CD8-positive, alpha-beta T cell (primary cell): ENCODE measurements at regions of chr5 and their contacts with region 1.

Region 1: DNA sequence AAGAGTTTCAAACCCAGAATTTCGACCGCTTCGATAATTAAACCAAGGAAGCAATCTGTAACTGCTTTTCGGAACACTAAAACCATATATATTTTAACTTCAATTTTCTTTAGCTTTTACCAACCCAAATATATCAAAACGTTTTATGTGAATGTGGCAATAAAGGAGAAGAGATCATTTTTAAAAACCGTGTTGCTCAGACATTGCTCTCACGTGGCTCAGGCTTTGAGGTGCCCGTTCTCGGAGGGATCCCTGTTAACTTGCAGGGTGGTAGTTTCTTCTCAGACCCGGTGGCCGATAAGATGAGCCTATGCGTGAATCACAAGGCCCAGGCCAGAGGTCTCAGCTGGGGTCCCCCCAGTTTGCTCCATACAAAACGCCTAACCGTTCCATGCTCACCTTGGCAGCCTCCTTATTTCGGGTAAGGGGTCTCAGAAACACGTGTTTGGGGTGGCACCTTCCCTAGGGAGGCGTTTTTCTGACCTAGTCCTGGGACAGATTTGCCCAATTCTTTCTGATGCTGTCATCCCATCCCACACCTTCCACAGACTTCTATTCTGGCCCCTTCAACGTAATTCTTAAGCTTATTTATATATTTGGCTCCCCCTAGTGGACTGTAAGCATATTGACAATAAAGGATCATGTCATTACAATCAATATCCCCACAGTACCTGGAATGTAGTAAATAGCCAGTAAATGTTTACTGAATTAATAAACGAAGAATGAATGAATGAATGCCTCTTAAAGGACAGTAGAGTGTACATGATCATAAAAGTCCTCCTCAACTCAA is 48.1 kb downstream of the THBS4 start:
- DNase-seq: peak in 5 of 9 experiments; percentile 15 to 69 (median 52)
- ATAC-seq: peak; percentile 83
- H3K4me3 ChIP-seq: peak overlapping the region; percentile 10 to 25
- H3K4me3 Mint-ChIP-seq: peak overlapping the region; percentile 78
- H3K27ac ChIP-seq: no peak overlapping the region
- H3K27ac Mint-ChIP-seq: peak overlapping the region; percentile 74
- H3K4me1 ChIP-seq: peaks cover 10% of the 10 kb centered on the region
- H3K4me1 Mint-ChIP-seq: peaks cover 11% of the 10 kb centered on the region
- H3K27me3 ChIP-seq: no peaks in the 10 kb centered on the region
- H3K27me3 Mint-ChIP-seq: no peaks in the 10 kb centered on the region
- CTCF ChIP-seq: peak; percentile 61

Region 2: GRCh38 chr5:79396265-79396664 is 687.0 kb before region 1 on chr5:
- CTCF ChIA-PET with region 1: no interaction called
- POLR2A ChIA-PET with region 1: no interaction called
- intact Hi-C with region 1: no loop called
- DNase-seq: no peak
- ATAC-seq: no peak
- H3K4me3 ChIP-seq: no peak overlapping the region
- H3K4me3 Mint-ChIP-seq: no peak overlapping the region
- H3K27ac ChIP-seq: no peak overlapping the region
- H3K27ac Mint-ChIP-seq: no peak overlapping the region
- H3K4me1 ChIP-seq: no peaks in the 10 kb centered on the region
- H3K4me1 Mint-ChIP-seq: no peaks in the 10 kb centered on the region
- H3K27me3 ChIP-seq: no peaks in the 10 kb centered on the region
- H3K27me3 Mint-ChIP-seq: no peaks in the 10 kb centered on the region
- CTCF ChIP-seq: no peak

Region 3: GRCh38 chr5:79857714-79858409 is 225.4 kb before region 1 on chr5:
- CTCF ChIA-PET with region 1: interaction called, 3 read pairs
- POLR2A ChIA-PET with region 1: no interaction called
- intact Hi-C with region 1: loop called in 1 of 2 experiments (anchors 1 kb)
- DNase-seq: peak; percentile 56 to 85 (median 76)
- ATAC-seq: peak; percentile 58
- H3K4me3 ChIP-seq: no peak overlapping the region
- H3K4me3 Mint-ChIP-seq: no peak overlapping the region
- H3K27ac ChIP-seq: no peak overlapping the region
- H3K27ac Mint-ChIP-seq: no peak overlapping the region
- H3K4me1 ChIP-seq: peaks cover 5% of the 10 kb centered on the region
- H3K4me1 Mint-ChIP-seq: peaks cover 2% of the 10 kb centered on the region
- H3K27me3 ChIP-seq: no peaks in the 10 kb centered on the region
- H3K27me3 Mint-ChIP-seq: peaks cover 2% of the 10 kb centered on the region
- CTCF ChIP-seq: peak; percentile 96

Region 4: DNA sequence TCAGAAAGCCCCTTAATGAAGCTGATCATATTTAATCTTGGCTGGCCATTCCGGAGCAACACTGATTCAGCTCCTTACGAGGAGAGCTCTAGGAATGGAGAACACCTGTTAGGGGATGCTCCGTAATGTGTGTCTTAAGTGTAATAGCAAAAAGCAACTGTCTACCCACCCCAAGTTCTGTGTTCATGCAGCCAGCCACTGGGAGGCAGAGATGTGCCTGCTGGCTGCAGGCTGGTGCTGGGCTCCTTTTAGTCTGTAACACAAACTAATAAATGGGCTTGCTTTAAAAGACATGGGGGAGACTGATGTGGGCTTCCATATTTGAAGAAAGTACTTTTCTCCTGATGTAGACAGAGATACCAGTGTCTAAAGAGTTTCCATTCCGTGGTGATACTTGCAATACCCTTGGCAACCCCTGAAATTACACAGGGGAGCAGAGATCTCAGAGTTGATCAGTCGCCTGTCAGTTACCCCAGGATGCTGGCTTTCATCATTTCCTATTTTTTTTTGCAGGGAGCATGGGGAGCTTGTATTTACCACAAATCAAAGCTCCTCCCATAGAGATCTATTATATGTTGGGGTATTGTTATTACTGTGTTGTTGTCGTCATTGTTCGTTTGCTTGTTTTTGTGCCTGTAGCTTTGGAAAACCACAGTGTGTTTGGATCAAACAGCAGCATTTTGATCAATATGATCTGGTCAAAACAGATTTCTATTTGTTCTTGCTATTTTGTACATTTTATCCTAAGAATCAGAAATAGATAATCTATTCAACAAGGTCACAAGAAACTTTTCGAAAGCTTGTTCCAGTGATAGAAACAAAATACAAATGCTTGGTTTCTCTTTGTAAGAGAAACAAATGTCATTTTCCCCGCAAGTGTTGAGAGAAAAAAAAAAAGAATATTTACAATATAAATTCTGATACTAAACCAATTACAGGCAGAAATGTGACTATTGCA is 158.1 kb before region 1 on chr5:
- CTCF ChIA-PET with region 1: interaction called, 32 read pairs
- POLR2A ChIA-PET with region 1: no interaction called
- intact Hi-C with region 1: loop called in 1 of 2 experiments (anchors 1 kb)
- DNase-seq: peak in 3 of 9 experiments; percentile 8 to 38 (median 21)
- ATAC-seq: no peak
- H3K4me3 ChIP-seq: no peak overlapping the region
- H3K4me3 Mint-ChIP-seq: no peak overlapping the region
- H3K27ac ChIP-seq: no peak overlapping the region
- H3K27ac Mint-ChIP-seq: no peak overlapping the region
- H3K4me1 ChIP-seq: no peaks in the 10 kb centered on the region
- H3K4me1 Mint-ChIP-seq: no peaks in the 10 kb centered on the region
- H3K27me3 ChIP-seq: no peaks in the 10 kb centered on the region
- H3K27me3 Mint-ChIP-seq: no peaks in the 10 kb centered on the region
- CTCF ChIP-seq: peak; percentile 34

Region 5: DNA sequence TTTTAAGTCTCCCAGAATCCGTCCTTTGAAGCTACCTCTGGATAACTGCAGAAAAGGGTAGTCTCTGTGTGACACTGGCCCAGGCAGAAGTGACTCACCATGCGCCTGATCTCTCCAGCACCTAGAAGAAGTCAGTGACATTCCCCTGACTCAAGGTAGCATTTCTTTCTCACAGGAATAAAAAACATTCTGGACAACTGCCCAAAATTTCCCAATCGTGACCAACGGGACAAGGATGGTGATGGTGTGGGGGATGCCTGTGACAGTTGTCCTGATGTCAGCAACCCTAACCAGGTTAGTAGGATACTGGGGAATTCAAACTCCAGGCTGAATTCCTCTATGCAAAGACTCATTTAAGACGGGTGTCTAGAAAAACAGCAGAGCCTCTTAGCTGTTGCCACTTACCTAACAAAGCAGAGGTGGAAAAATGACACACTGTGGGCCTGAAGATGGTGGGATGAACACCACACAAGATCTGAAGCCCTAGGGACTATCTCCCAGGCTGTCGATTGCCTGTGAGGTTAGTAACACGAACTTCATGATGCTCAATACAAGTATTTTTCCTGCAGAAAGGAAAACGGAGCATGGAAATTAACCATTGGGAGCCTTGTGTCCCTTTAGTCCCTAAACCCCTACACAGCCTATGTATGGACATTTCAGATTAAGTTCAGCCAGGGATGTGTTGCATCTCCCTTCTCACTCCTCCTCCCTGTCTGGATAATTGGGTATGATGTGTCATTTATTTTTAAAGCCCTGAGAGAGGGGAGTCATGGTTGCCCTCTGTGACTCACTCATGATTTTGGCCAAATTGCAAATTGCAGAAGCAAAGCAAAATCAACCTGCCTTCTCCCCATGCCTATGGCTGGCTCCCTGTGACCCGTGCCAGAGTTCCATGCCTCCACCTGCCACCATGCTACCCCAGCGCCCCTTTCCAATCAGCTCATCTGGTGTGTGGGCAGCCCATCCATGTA is 10.9 kb before region 1 on chr5:
- CTCF ChIA-PET with region 1: interaction called, 17 read pairs
- POLR2A ChIA-PET with region 1: no interaction called
- intact Hi-C with region 1: no loop called
- DNase-seq: no peak
- ATAC-seq: no peak
- H3K4me3 ChIP-seq: no peak overlapping the region
- H3K4me3 Mint-ChIP-seq: no peak overlapping the region
- H3K27ac ChIP-seq: no peak overlapping the region
- H3K27ac Mint-ChIP-seq: no peak overlapping the region
- H3K4me1 ChIP-seq: no peaks in the 10 kb centered on the region
- H3K4me1 Mint-ChIP-seq: no peaks in the 10 kb centered on the region
- H3K27me3 ChIP-seq: no peaks in the 10 kb centered on the region
- H3K27me3 Mint-ChIP-seq: no peaks in the 10 kb centered on the region
- CTCF ChIP-seq: no peak

Region 6: DNA sequence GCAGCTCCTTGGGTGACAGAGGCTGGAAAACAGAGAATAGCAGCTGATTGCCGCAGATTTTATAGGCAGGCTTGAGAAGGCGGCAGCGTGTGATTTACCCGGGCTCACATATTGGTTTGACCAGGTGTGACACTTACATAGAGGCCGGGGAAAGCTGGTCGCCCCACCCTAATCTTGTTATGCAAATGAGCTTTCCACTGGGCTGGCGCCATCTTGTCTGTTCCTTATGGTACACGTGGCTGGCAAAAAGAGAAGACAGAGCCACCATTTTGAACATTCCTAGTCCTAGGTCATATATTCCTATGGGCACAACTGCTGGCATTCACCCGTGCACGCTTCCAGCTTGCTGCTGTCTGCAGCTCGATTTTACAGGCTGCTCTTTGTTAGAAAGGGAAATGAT is 225.2 kb after region 1 on chr5:
- CTCF ChIA-PET with region 1: interaction called, 138 read pairs
- POLR2A ChIA-PET with region 1: no interaction called
- intact Hi-C with region 1: loop called in 1 of 2 experiments (anchors 2 kb)
- DNase-seq: no peak
- ATAC-seq: no peak
- H3K4me3 ChIP-seq: no peak overlapping the region
- H3K4me3 Mint-ChIP-seq: no peak overlapping the region
- H3K27ac ChIP-seq: no peak overlapping the region
- H3K27ac Mint-ChIP-seq: no peak overlapping the region
- H3K4me1 ChIP-seq: no peaks in the 10 kb centered on the region
- H3K4me1 Mint-ChIP-seq: no peaks in the 10 kb centered on the region
- H3K27me3 ChIP-seq: no peaks in the 10 kb centered on the region
- H3K27me3 Mint-ChIP-seq: no peaks in the 10 kb centered on the region
- CTCF ChIP-seq: no peak

Region 7: DNA sequence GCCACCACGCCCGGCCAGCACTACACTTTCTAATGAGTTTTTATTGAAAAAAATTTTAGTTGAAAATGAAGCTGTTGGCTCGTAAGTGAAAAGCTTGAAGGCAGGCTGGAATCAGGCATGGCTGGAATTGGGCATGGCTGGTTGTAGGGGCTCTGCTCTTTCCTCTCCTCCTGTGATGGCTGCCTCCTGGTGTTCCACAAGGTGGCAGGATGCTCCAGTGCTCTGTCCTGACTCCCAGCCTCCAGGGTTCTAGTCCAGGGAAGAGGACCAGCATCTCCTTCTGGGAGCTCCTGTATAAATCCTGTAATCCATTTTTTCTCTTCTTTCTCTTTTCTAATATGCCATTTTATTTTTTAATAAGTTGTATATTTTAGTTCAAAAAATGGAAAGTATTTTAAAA is 628.6 kb after region 1 on chr5:
- CTCF ChIA-PET with region 1: no interaction called
- POLR2A ChIA-PET with region 1: no interaction called
- intact Hi-C with region 1: no loop called
- DNase-seq: peak in 2 of 9 experiments; percentile 17 to 39
- ATAC-seq: no peak
- H3K4me3 ChIP-seq: no peak overlapping the region
- H3K4me3 Mint-ChIP-seq: no peak overlapping the region
- H3K27ac ChIP-seq: no peak overlapping the region
- H3K27ac Mint-ChIP-seq: no peak overlapping the region
- H3K4me1 ChIP-seq: no peaks in the 10 kb centered on the region
- H3K4me1 Mint-ChIP-seq: peaks cover 8% of the 10 kb centered on the region
- H3K27me3 ChIP-seq: no peaks in the 10 kb centered on the region
- H3K27me3 Mint-ChIP-seq: no peaks in the 10 kb centered on the region
- CTCF ChIP-seq: no peak